Ascending aorta (tissue), 2 donors: ENCODE measurements at regions of chr20 and their contacts with region 1.

Region 1: GRCh38 chr20:45890985-45891983 is at the starts of genes CTSA and NEURL2:
- DNase-seq: peak; percentile 76 to 96
- H3K4me3 ChIP-seq: peak within 1 kb of the TSS; percentile 71 to 87
- H3K27ac ChIP-seq: peak within 1 kb of the TSS; percentile 68 to 71
- H3K4me1 ChIP-seq: peaks cover 8 to 12% of the 10 kb centered on the region in 2 donors
- H3K27me3 ChIP-seq: no peaks in the 10 kb centered on the region
- CTCF ChIP-seq: no peak
- total RNA-seq, gene CTSA: 82.0 TPM
- total RNA-seq, gene NEURL2: 4.0 TPM

Region 2: DNA sequence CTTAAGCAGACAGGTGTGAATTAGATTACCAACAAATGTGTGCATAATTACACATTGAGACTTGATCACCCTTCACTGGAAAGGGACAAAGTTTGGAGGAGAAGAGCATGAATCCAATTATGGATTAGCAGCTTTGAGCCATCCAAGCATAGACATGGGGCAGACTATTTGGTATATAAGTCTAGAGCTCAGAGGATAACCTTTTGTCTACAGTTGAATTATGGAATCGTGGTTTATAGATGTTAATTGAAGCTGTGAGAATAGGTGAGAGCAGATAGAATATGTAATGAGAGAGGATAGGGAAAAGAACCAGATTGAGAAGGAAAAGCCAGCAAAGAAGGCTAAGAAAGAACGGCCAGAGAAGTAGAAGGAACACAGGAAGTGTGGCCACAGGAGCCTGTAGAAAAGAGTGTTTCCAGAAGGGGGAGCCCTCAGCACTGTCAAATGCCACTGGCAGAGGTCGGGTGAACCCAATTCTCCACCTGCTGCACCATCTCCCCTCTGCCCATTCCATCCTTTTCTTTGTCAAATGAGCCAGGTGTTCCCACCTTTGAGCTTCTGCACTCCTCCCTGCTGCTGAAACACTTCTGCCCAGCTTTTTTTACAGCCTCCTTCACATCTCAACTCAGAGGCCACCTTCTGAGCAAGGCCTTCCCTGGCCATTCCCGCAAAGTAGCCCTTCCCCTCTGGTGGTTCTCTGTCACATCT is 92.2 kb before region 1 on chr20:
- intact Hi-C with region 1: loop called (anchors 1 kb)
- DNase-seq: peak in 1 of 2 donors; percentile 82
- H3K4me3 ChIP-seq: no peak overlapping the region
- H3K27ac ChIP-seq: peak overlapping the region; percentile 44 to 51
- H3K4me1 ChIP-seq: no peaks in the 10 kb centered on the region
- H3K27me3 ChIP-seq: no peaks in the 10 kb centered on the region
- CTCF ChIP-seq: peak; percentile 70 to 77 (median 75)

Region 3: DNA sequence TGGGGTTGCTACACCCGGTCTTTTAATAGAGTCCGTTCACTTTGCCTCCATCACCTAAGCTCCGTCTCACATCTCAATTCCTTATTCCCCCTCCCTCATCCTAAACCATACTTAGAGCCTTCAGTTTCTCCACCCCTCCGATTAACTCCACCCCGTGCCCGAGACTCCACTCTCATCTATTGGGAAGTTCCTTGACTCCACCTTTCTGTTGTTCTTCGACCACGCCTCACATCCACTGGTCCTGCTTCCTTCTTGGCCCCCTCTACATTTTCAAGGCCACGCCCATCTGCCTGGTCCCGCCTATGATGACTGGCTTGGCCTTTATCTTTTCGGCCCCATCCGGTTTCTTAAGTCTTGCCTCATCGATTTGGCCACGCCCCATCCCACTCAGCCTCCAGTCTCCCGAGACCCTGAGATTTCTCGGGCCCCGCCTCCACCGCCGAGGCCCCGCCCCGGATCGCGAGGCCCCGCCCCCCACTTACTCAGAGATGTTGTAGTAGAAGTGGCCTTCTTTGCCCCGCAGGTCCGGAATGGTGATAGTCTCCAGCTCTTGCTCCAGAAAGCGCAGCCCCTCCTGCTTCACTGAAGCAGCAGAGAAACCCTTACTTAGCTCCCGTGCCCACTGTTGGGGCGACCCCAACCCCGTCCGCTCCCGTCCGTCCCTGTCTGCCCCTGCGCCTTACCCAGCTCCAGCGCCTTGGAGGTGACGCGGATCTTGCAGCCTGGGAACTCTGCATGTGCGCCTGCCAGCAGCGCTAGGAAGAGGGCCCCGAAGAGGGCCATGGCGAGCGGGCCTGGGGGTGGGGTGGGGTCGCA is 19.6 kb after region 1 on chr20:
- intact Hi-C with region 1: loop called (anchors 1 kb)
- DNase-seq: peak; percentile 98 to 99
- H3K4me3 ChIP-seq: peak overlapping the region; percentile 49 to 64
- H3K27ac ChIP-seq: peak overlapping the region; percentile 38 to 71
- H3K4me1 ChIP-seq: peaks cover 6 to 13% of the 10 kb centered on the region in 2 donors
- H3K27me3 ChIP-seq: no peaks in the 10 kb centered on the region
- CTCF ChIP-seq: no peak